Breast epithelium (tissue), 4 donors: ENCODE measurements at regions of chr2 and their contacts with region 1.

Region 1: DNA sequence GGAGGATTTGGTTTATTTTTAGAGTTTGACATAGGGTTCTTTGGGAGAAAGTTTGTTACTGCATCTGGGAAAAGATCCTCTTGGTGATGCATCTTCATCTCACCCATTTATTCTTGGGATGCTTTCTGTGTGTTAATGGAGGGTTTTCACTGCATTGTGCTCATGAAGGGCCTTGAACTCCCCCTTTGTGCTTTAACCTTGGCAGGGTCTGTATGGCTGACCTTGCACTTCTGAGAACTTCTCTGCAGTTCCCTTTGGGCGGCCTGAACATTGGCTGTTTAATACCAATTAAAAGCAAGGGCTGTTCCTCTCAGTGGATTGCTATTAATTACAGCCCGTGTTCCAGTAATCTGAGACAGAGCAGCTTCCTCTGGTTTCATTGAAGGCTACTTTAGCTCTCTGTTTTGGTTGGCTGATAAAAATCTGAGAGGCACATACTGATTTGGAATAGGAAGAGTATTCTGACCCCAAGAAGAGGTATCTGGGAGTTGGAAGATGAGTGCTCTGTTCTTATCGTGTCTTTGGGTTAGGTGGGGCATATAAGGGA is 37.5 kb downstream of the FMNL2 start:
- DNase-seq: no peak
- H3K4me3 ChIP-seq: no peak overlapping the region
- H3K27ac ChIP-seq: no peak overlapping the region
- H3K4me1 ChIP-seq: no peaks in the 10 kb centered on the region
- H3K27me3 ChIP-seq: no peaks in the 10 kb centered on the region
- CTCF ChIP-seq: no peak
- POLR2A ChIP-seq: no peak

Region 2: GRCh38 chr2:152534460-152535135 is 162.1 kb after region 1 on chr2:
- intact Hi-C with region 1: loop called (anchors 5 kb)
- DNase-seq: no peak
- H3K4me3 ChIP-seq: no peak overlapping the region
- H3K27ac ChIP-seq: no peak overlapping the region
- H3K4me1 ChIP-seq: no peaks in the 10 kb centered on the region
- H3K27me3 ChIP-seq: no peaks in the 10 kb centered on the region
- CTCF ChIP-seq: no peak
- POLR2A ChIP-seq: no peak